ENCODE measurements at regions of chr2 and their contacts with region 1.

Region 1: GRCh38 chr2:233990261-233990798 is 60.2 kb upstream of the SPP2 start:
- DNase-seq: peak in 13 of 14 experiments; percentile 9 to 94 (median 48)
- ATAC-seq: peak; percentile 89
- H3K4me3 ChIP-seq: peak overlapping the region; percentile 6
- H3K4me3 Mint-ChIP-seq: peak overlapping the region; percentile 12
- H3K27ac ChIP-seq: peak overlapping the region in 1 of 2 donors; percentile 20
- H3K27ac Mint-ChIP-seq: peak overlapping the region; percentile 74
- H3K4me1 ChIP-seq: peaks cover 55% of the 10 kb centered on the region
- H3K4me1 Mint-ChIP-seq: peaks cover 59% of the 10 kb centered on the region
- H3K27me3 ChIP-seq: no peaks in the 10 kb centered on the region
- H3K27me3 Mint-ChIP-seq: no peaks in the 10 kb centered on the region
- CTCF ChIP-seq: no peak

Region 2: DNA sequence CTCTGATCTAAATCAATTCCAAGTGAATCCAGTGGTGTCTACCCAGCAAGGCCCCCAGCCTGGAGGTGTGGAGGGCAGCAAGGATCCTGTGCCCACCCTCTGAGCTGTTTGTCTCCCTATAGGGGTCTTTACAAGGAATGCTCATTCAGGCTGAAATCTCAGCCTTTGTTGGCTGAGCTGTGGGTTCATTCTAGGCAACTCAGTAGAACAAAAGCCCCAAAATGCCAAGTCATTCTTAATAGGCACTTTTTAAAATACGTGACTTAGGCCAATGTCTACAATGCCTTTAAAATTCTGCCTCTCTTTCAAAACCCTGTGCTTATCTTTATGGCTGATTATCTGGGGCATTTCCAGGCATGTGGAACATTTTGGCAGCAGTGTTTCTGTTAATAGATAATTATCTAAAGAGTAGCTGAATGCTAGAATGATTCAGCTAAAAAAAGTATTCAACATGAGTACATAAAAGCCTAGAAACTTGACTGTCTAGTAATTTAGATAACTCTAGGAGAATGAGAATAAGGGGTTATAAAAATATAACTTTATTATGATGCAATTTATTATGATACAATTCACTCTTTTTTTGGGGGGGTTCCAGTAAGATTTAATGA is 290.2 kb before region 1 on chr2:
- CTCF ChIA-PET with region 1: no interaction called
- POLR2A ChIA-PET with region 1: no interaction called
- intact Hi-C with region 1: no loop called
- DNase-seq: no peak
- ATAC-seq: no peak
- H3K4me3 ChIP-seq: no peak overlapping the region
- H3K4me3 Mint-ChIP-seq: no peak overlapping the region
- H3K27ac ChIP-seq: no peak overlapping the region
- H3K27ac Mint-ChIP-seq: no peak overlapping the region
- H3K4me1 ChIP-seq: no peaks in the 10 kb centered on the region
- H3K4me1 Mint-ChIP-seq: no peaks in the 10 kb centered on the region
- H3K27me3 ChIP-seq: peaks cover 0 to 4% of the 10 kb centered on the region in 2 experiments
- H3K27me3 Mint-ChIP-seq: peaks cover 13% of the 10 kb centered on the region
- CTCF ChIP-seq: no peak

Region 3: DNA sequence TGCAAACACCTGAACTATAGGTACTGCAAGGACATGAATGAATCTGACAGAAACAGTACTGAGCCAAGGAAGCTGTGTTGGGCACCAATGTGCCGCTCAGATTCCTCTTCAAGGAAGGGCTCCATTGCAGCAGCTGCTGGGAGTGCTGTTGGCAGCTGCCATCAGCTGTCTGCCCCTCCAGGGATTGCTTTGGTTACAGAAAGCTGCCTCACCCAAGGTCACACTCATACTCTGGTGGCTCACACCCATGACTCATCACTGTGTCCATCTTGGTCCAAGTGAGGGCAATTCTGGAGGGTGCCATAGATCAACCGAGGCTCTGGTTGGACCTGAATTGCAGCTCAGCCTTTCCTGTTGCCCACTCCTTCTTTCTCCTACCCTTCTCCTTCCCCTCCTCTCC is 97.5 kb before region 1 on chr2:
- CTCF ChIA-PET with region 1: no interaction called
- POLR2A ChIA-PET with region 1: no interaction called
- intact Hi-C with region 1: no loop called
- DNase-seq: no peak
- ATAC-seq: no peak
- H3K4me3 ChIP-seq: no peak overlapping the region
- H3K4me3 Mint-ChIP-seq: no peak overlapping the region
- H3K27ac ChIP-seq: no peak overlapping the region
- H3K27ac Mint-ChIP-seq: no peak overlapping the region
- H3K4me1 ChIP-seq: no peaks in the 10 kb centered on the region
- H3K4me1 Mint-ChIP-seq: no peaks in the 10 kb centered on the region
- H3K27me3 ChIP-seq: peaks cover 10 to 14% of the 10 kb centered on the region in 2 experiments
- H3K27me3 Mint-ChIP-seq: peaks cover 51% of the 10 kb centered on the region
- CTCF ChIP-seq: no peak

Region 4: DNA sequence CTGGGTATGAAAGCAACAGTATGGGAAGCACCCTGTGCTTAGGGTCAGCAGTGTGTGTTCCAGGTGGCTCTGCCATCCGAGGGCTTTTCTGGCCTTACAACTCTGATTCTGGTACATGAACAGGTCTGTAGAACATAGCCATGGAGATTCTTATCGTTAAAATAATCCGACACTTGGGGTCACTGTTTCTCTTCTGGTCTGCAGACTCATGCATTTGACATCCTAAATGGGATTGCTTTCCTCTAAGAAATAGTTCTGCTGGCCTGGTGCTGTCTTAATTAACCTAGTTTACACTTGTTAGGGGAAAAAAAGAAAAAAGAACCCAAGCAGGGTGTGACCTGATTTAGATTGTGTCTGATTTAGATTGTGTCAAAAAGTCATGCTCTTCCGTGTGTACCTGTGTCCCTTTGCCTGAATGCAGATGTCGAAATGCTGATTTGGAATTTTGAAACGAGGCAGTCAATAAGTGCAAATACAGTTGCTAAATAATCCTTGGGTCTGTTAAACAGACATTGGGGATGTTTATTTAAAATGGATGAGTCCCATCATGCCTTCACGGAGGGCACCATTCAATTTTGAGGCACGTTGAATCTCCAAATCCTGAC is 13.5 kb before region 1 on chr2:
- CTCF ChIA-PET with region 1: no interaction called
- POLR2A ChIA-PET with region 1: no interaction called
- intact Hi-C with region 1: no loop called
- DNase-seq: peak in 4 of 14 experiments; percentile 40 to 80 (median 80)
- ATAC-seq: peak; percentile 68
- H3K4me3 ChIP-seq: no peak overlapping the region
- H3K4me3 Mint-ChIP-seq: no peak overlapping the region
- H3K27ac ChIP-seq: no peak overlapping the region
- H3K27ac Mint-ChIP-seq: no peak overlapping the region
- H3K4me1 ChIP-seq: peaks cover 17% of the 10 kb centered on the region
- H3K4me1 Mint-ChIP-seq: peaks cover 28% of the 10 kb centered on the region
- H3K27me3 ChIP-seq: no peaks in the 10 kb centered on the region
- H3K27me3 Mint-ChIP-seq: no peaks in the 10 kb centered on the region
- CTCF ChIP-seq: peak; percentile 81

Region 5: DNA sequence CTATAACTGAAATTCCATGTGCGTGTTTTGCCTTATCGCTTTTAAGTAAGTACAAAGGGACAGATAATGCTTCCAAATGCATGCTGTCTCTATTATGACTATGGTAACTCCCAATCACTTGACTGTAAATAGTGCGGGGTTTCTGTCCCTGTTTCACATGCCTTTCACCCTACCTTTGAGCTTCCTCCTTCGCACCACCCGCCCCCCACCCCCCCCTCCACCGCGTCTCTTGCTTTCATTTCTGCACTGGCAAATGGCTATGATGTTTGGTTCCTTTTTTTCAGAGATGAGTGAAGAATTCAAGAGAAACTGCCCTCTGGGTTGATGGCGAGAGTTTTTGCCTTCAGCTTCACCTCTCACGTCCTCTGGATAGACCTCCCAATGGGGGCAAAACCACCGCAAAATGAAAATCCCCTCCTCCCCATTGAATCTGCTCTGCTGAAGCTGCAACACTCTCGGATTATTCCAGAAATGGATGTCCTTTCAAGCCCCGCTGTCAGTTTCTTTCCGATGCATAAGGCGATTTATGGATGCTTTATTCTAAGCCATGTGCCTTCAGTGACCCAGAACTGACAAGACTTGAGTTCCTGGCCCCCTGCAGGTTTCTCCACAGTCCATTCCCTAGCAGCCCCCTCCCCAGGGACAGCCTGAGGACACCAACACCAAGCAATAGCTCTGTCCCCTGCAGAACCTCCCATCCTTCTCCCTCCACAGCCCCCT is 35.3 kb after region 1 on chr2:
- CTCF ChIA-PET with region 1: interaction called, 3 read pairs
- POLR2A ChIA-PET with region 1: interaction called, 14 read pairs
- intact Hi-C with region 1: loop called (anchors 2 to 5 kb)
- DNase-seq: peak in 4 of 14 experiments; percentile 54 to 59 (median 56)
- ATAC-seq: peak; percentile 84
- H3K4me3 ChIP-seq: peak overlapping the region; percentile 39
- H3K4me3 Mint-ChIP-seq: peak overlapping the region; percentile 88
- H3K27ac ChIP-seq: no peak overlapping the region
- H3K27ac Mint-ChIP-seq: peak overlapping the region; percentile 2
- H3K4me1 ChIP-seq: peaks cover 49% of the 10 kb centered on the region
- H3K4me1 Mint-ChIP-seq: peaks cover 37% of the 10 kb centered on the region
- H3K27me3 ChIP-seq: no peaks in the 10 kb centered on the region
- H3K27me3 Mint-ChIP-seq: no peaks in the 10 kb centered on the region
- CTCF ChIP-seq: no peak

Region 6: DNA sequence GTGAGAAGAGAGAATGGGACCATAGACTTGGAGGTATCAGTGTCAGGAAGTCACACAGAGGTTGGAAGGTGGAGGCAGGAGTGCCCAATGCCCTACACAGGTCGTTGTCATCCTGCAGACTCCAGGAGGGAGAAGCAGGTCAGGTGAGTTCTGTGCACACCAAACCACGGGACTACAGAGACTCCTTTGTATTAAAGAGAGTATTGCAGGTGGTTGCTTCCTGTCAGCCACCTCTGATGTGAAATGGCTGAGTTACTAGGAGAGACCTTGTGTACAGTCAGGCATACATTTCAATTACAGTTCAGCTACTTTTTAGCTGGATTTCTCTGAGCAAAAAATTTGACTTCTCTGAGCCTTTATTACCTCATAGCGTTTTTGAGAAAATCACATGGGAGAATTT is 111.8 kb after region 1 on chr2:
- CTCF ChIA-PET with region 1: no interaction called
- POLR2A ChIA-PET with region 1: interaction called, 5 read pairs
- intact Hi-C with region 1: loop called in 1 of 2 experiments (anchors 10 kb)
- DNase-seq: peak in 6 of 14 experiments; percentile 11 to 72 (median 50)
- ATAC-seq: peak; percentile 89
- H3K4me3 ChIP-seq: no peak overlapping the region
- H3K4me3 Mint-ChIP-seq: peak overlapping the region; percentile 73
- H3K27ac ChIP-seq: no peak overlapping the region
- H3K27ac Mint-ChIP-seq: peak overlapping the region; percentile 31
- H3K4me1 ChIP-seq: peaks cover 32% of the 10 kb centered on the region
- H3K4me1 Mint-ChIP-seq: peaks cover 50% of the 10 kb centered on the region
- H3K27me3 ChIP-seq: no peaks in the 10 kb centered on the region
- H3K27me3 Mint-ChIP-seq: no peaks in the 10 kb centered on the region
- CTCF ChIP-seq: peak; percentile 41

Region 7: DNA sequence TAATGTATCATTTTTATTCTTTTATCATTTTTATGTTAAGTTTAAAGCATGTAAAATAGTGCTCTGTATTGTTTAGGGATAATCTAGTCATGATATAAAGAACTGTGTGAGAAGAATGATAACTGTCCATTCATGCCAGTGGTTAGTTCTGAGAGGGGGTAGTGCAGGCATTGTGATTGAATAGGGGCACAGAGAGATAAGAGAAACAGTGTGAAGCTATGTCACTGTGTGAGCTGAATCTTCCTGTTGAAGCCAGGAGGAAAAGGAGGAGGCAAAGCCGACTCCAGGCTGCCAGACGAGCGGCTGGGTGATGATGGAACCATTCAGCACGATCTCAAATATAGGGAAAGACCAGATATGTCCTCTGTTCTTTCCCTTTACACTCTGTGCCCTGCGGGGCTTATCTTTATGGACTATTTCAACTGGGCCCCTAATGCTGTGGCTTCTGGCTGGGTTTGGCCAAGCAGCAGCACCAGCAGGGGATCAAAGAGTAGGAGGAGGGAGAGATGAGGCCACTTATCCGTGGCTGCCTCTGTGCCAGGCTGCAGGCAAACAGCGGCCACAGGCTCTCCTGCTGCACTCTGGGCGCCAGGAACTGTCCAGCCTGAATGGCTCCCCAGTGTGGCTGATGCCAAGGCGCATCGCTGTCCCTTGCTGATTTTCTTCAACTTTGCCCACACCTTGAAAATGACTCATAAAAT is 188.2 kb after region 1 on chr2:
- CTCF ChIA-PET with region 1: no interaction called
- POLR2A ChIA-PET with region 1: no interaction called
- intact Hi-C with region 1: no loop called
- DNase-seq: no peak
- ATAC-seq: no peak
- H3K4me3 ChIP-seq: no peak overlapping the region
- H3K4me3 Mint-ChIP-seq: no peak overlapping the region
- H3K27ac ChIP-seq: no peak overlapping the region
- H3K27ac Mint-ChIP-seq: no peak overlapping the region
- H3K4me1 ChIP-seq: no peaks in the 10 kb centered on the region
- H3K4me1 Mint-ChIP-seq: no peaks in the 10 kb centered on the region
- H3K27me3 ChIP-seq: no peaks in the 10 kb centered on the region
- H3K27me3 Mint-ChIP-seq: no peaks in the 10 kb centered on the region
- CTCF ChIP-seq: no peak

Measured in CD4-positive, alpha-beta T cell (primary cell).